ENCODE measurements at regions of chr12 and their contacts with region 1.

Region 1: DNA sequence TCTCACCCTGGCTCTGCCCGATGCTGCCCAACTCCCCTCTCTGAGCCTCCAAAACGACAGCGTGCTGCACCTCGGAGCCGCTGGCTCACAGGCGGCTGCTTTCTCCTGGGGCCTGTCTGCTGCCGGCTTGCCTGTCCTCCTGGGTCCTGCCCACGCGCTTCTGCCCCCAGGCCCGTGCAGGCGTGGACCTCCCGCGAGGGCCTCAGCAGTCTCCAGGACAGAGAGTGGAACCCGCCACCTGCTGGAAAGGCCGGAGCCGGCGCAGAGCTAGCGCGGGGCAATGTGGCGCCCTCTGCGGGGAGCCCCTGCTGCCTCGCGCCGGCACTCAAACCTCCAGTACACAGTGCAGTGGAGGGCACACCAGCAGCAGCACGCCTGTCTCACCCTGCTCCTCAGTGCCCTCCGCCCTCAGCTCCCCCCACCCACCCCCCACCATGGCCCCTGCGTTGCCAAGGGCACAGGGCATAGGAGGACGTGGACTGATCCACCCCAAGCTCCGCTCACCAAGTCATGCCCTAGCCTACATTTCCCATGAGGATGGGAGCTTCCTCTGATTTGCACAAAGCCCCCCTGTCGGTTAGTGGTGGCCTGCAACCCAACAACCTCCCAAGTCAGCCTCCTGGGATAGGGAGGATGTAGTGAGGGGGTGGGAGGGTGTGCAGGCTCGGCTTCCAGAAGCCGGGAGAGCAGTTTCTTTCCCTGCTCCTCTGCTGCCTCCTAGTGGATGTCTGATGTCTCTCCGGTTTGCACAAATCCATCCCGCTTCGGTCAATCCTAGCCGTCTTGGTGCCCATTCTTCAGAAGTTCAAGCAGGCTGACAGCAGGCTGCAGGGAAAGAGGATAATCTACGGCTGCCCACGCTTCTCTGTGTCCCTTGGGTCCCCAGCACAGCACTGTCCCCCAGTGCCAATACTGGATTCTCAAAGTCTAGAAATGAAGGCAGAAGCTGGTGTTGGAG is 25.2 kb downstream of the KRT8 start:
- DNase-seq: peak; percentile 86
- ATAC-seq: peak; percentile 94
- H3K4me3 ChIP-seq: no peak overlapping the region
- H3K27ac ChIP-seq: no peak overlapping the region
- H3K4me1 ChIP-seq: peaks cover 3% of the 10 kb centered on the region
- H3K27me3 ChIP-seq: no peaks in the 10 kb centered on the region
- CTCF ChIP-seq: peak; percentile 98
- POLR2A ChIP-seq: peak; percentile 52
- RAD21 ChIP-seq: peak; percentile 97

Region 2: DNA sequence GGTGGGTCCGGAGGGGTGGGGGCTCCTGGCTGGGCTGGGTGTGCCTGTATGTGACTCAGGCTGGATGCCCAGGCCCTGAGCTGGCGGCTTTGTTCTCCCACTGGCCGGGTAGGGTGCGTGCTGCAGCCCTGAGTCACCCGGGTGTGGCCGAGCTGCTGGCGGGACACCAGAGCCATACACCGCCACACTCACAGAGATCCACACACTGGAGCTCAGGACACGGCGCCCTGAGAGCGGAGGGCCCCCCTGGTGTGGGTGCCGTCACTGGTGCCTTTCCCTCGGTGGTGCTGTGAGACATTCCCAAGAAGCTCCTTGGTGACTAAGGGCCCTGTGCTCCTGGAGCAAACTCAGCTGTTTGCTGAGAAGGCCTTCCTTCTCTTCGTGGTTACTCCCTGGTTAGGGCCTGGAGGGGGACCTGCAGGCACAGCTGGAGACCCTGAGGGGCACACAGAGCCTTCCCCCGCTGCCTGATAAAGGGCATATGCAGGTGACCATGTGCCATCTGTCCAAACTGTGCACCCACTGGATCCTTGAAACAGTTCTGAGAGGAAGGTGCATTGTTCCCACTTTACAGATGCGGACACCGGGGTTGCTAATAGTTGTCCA is 732.2 kb before region 1 on chr12:
- CTCF ChIA-PET with region 1: interaction called, 9 read pairs
- POLR2A ChIA-PET with region 1: no interaction called
- dilution Hi-C with region 1: no loop called
- in situ Hi-C with region 1: loop called (anchors 5 kb)
- intact Hi-C with region 1: loop called (anchors 2 kb)
- DNase-seq: peak; percentile 99
- ATAC-seq: peak; percentile 85
- H3K4me3 ChIP-seq: no peak overlapping the region
- H3K27ac ChIP-seq: peak overlapping the region; percentile 97
- H3K4me1 ChIP-seq: peaks cover 43% of the 10 kb centered on the region
- H3K27me3 ChIP-seq: no peaks in the 10 kb centered on the region
- CTCF ChIP-seq: no peak
- POLR2A ChIP-seq: peak; percentile 31; the same call in 1 of the 2 replicates
- RAD21 ChIP-seq: peak; percentile 15; the same call in 1 of the 2 replicates

Region 3: GRCh38 chr12:52213512-52214420 is 665.9 kb before region 1 on chr12:
- CTCF ChIA-PET with region 1: no interaction called
- POLR2A ChIA-PET with region 1: no interaction called
- dilution Hi-C with region 1: no loop called
- in situ Hi-C with region 1: no loop called
- intact Hi-C with region 1: loop called (anchors 10 kb)
- DNase-seq: peak; percentile 78
- ATAC-seq: peak; percentile 98
- H3K4me3 ChIP-seq: no peak overlapping the region
- H3K27ac ChIP-seq: no peak overlapping the region
- H3K4me1 ChIP-seq: peaks cover 9% of the 10 kb centered on the region
- H3K27me3 ChIP-seq: no peaks in the 10 kb centered on the region
- CTCF ChIP-seq: peak; percentile 100
- POLR2A ChIP-seq: no peak
- RAD21 ChIP-seq: peak; percentile 100

Region 4: GRCh38 chr12:52372216-52373154 is 507.2 kb before region 1 on chr12:
- CTCF ChIA-PET with region 1: interaction called, 41 read pairs
- POLR2A ChIA-PET with region 1: no interaction called
- dilution Hi-C with region 1: no loop called
- in situ Hi-C with region 1: loop called (anchors 5 kb)
- intact Hi-C with region 1: loop called (anchors 1 kb)
- DNase-seq: peak; percentile 81
- ATAC-seq: peak; percentile 94
- H3K4me3 ChIP-seq: no peak overlapping the region
- H3K27ac ChIP-seq: no peak overlapping the region
- H3K4me1 ChIP-seq: no peaks in the 10 kb centered on the region
- H3K27me3 ChIP-seq: peaks cover 36% of the 10 kb centered on the region
- CTCF ChIP-seq: peak; percentile 93
- POLR2A ChIP-seq: no peak
- RAD21 ChIP-seq: peak; percentile 92

Region 5: DNA sequence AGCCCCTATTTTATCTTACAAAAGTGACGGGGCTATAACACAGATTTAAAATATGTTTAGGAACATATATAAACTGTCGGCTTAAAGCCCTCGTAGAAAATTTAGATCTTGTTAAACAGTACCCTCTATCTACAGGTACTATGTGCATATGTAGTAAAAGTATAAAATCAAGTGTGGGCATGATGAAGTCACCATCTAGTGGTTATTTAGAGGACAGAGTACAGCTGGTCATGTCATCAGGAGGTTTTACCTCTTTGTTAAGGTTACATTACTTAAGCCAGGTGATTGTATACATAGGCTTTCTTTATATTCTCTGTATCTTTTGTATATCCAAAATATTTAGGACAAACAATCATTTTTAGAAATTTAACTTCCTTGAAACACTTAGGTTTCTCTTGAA is 151.9 kb after region 1 on chr12:
- CTCF ChIA-PET with region 1: no interaction called
- POLR2A ChIA-PET with region 1: no interaction called
- dilution Hi-C with region 1: no loop called
- in situ Hi-C with region 1: no loop called
- intact Hi-C with region 1: no loop called
- DNase-seq: no peak
- ATAC-seq: no peak
- H3K4me3 ChIP-seq: no peak overlapping the region
- H3K27ac ChIP-seq: no peak overlapping the region
- H3K4me1 ChIP-seq: no peaks in the 10 kb centered on the region
- H3K27me3 ChIP-seq: no peaks in the 10 kb centered on the region
- CTCF ChIP-seq: no peak
- POLR2A ChIP-seq: no peak
- RAD21 ChIP-seq: no peak

Region 6: DNA sequence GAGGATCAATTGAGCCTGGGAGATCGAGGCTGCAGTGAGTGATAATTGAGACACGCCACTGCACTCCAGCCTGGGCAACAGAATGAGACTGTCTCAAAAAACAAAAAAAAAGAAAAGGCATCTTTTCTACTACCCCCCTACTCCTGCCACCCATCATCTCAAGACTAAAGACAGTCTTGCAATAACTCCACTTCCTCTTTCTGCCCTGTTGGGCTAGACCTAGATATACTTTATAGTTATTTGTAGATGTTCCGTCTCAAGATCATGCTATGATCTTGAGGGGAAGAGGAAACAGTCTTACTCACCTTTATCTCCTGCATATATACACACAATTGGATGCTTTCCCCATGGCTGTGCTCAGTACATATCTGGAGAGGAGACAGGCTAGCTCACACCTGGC is 376.3 kb after region 1 on chr12:
- CTCF ChIA-PET with region 1: no interaction called
- POLR2A ChIA-PET with region 1: no interaction called
- dilution Hi-C with region 1: no loop called
- in situ Hi-C with region 1: no loop called
- intact Hi-C with region 1: no loop called
- DNase-seq: no peak
- ATAC-seq: no peak
- H3K4me3 ChIP-seq: no peak overlapping the region
- H3K27ac ChIP-seq: no peak overlapping the region
- H3K4me1 ChIP-seq: peaks cover 9% of the 10 kb centered on the region
- H3K27me3 ChIP-seq: no peaks in the 10 kb centered on the region
- CTCF ChIP-seq: no peak
- POLR2A ChIP-seq: no peak
- RAD21 ChIP-seq: no peak

Measured in IMR-90 (cell line).